ENCODE measurements at regions of chr16 and their contacts with region 1.

Region 1: DNA sequence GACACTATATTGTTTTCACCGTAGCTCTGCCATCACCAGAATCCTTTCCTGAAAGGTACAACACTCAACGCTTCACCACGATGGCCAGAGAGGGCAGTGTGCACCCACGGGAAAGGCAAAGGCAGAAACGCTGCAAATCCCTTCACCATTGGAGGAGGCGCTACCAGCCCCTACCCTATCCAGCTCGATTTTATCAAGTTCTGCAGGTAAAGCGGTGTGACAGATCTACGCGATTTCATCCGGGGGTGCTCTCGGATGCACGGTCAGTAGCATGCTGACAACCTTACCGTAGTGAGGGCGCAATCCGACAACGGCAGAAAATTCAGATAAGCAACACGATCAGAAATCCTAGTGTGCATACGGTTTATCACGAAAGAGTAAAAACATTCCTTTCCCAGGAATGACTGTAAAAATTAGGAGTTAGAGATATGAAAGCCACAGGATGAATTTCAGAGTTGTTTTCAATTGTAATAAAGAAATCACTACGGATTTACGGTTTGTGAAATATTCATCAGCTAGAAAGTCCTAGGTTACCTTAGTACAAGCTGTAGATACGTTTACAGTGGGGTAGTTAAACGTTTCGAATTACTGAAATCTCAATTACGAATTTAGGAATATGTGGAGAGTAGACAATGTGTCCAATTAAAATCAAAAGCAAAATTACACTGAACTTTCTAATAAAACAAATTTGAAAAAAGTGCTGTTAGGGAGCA is 1.8 kb downstream of the NETO2 start:
- DNase-seq: peak; percentile 31
- H3K4me3 ChIP-seq: peak overlapping the region; percentile 73
- CTCF ChIP-seq: peak; percentile 98

Region 2: GRCh38 chr16:46920402-46921068 is 221.4 kb before region 1 on chr16:
- CTCF ChIA-PET with region 1: no interaction called
- POLR2A ChIA-PET with region 1: no interaction called
- DNase-seq: no peak
- H3K4me3 ChIP-seq: no peak overlapping the region
- CTCF ChIP-seq: no peak

Region 3: GRCh38 chr16:47037746-47038458 is 104.0 kb before region 1 on chr16:
- CTCF ChIA-PET with region 1: interaction called, 25 read pairs
- POLR2A ChIA-PET with region 1: no interaction called
- DNase-seq: no peak
- H3K4me3 ChIP-seq: peak overlapping the region; percentile 70
- CTCF ChIP-seq: peak; percentile 99

Region 4: GRCh38 chr16:47156680-47157215 is 14.8 kb after region 1 on chr16:
- CTCF ChIA-PET with region 1: interaction called, 30 read pairs
- POLR2A ChIA-PET with region 1: no interaction called
- DNase-seq: no peak
- H3K4me3 ChIP-seq: no peak overlapping the region
- CTCF ChIP-seq: no peak

Region 5: DNA sequence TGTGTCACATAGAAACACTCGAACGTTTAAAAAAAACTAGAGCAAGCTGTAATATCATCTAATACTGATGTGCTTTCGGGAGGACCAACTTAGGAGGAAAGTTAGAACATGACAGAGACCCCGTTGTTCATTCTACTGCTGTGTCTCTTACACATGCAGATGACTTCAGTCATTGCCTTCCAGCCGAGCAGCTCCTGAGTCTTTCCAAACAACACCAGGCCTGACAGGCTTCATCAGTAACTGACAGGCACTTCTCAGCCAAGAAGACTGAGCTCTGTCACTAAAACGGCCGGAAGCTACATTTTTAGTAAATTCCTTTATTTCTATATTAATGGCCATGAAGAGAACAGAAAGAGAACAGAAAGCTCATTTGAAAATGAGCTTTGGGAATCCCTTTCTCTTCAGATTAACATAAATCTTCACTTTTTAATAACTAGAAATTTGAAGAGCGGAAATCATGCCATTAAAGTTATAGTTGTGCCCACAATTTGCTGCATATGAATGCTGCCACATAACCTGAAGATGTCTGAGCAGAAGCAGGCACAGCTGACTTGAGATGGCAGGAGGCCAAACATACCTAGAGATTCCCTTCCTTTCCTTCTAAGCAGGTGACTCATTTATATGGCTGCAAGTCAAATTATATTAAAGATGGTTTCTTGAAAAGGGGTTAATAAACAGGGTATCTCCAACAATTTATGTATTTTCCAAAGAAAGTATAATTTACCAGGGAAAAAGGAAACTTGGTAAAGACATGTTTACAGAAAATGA is 170.0 kb after region 1 on chr16:
- CTCF ChIA-PET with region 1: no interaction called
- POLR2A ChIA-PET with region 1: no interaction called
- DNase-seq: no peak
- H3K4me3 ChIP-seq: no peak overlapping the region
- CTCF ChIP-seq: no peak

Region 6: DNA sequence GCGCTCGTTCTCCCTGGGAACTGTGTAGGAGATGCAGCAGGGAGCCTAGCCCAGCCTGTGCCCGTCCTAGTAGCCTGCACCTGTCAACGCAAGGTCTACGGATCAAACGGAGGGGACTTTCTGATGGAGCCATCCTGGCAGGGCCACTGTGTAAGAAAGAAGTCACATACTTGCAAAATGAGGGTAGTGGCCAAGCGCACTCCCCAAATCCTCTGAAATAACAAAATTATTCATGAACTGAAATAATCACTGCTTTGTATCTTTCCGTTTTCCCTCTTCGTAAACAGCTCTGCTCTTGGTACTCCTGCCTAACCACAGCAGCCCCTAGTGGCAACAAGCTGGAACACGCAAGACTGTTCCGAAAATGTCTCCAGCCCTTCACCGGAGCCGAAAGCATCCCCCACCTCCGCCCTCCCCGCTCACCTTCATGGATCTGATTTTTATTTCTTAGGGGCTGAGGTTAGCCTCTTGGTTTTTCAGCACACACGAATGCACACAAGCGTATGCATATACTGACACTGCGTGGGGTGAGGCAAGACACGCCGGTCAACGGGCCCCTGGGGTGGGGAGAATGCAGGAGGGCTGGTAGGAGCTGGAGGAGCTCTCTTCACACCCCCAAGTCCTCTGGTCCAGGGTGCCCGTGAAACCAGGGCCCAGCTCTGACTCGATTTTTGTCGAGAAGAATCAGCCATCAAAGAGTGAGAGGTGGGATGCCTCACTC is 913.1 kb after region 1 on chr16:
- CTCF ChIA-PET with region 1: interaction called, 26 read pairs
- POLR2A ChIA-PET with region 1: no interaction called
- DNase-seq: no peak
- H3K4me3 ChIP-seq: no peak overlapping the region
- CTCF ChIP-seq: peak; percentile 91

Region 7: GRCh38 chr16:48123104-48123788 is 981.3 kb after region 1 on chr16:
- CTCF ChIA-PET with region 1: interaction called, 14 read pairs
- POLR2A ChIA-PET with region 1: no interaction called
- DNase-seq: peak; percentile 98
- H3K4me3 ChIP-seq: no peak overlapping the region
- CTCF ChIP-seq: no peak

Region 8: GRCh38 chr16:48164907-48165726 is 1023.2 kb after region 1 on chr16:
- CTCF ChIA-PET with region 1: interaction called, 322 read pairs
- POLR2A ChIA-PET with region 1: no interaction called
- DNase-seq: no peak
- H3K4me3 ChIP-seq: no peak overlapping the region
- CTCF ChIP-seq: peak; percentile 92

Measured in AG04449 (cell line).